Calu3 (cell line): ENCODE measurements at regions of chr3 and their contacts with region 1.

Region 1: GRCh38 chr3:180802837-180803236 is 109.6 kb upstream of the FXR1 start:
- DNase-seq: peak; percentile 20
- H3K4me3 Mint-ChIP-seq: no peak overlapping the region
- H3K27ac Mint-ChIP-seq: no peak overlapping the region
- H3K4me1 Mint-ChIP-seq: no peaks in the 10 kb centered on the region
- H3K27me3 Mint-ChIP-seq: no peaks in the 10 kb centered on the region
- CTCF ChIP-seq: peak; percentile 59

Region 2: DNA sequence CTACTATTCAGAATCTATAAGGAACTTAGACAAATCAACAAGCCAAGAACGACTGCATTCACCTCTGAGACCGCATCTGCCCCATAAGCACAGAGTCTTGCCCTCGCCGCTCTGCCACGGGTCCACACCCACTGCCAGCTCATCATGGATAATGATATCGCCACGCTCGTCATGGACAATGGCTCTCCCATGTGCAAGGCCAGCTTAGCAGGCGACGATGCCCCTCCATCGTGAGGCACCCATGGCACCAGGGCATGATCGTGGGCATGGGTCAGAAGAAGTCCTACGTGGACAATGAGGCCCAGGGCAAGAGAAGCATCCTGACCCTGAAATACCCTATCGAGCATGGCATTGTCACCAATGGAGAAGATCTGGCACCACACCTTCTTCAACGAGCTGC is 17.6 kb after region 1 on chr3:
- CTCF ChIA-PET with region 1: no interaction called
- intact Hi-C with region 1: no loop called
- DNase-seq: no peak
- H3K4me3 Mint-ChIP-seq: no peak overlapping the region
- H3K27ac Mint-ChIP-seq: no peak overlapping the region
- H3K4me1 Mint-ChIP-seq: no peaks in the 10 kb centered on the region
- H3K27me3 Mint-ChIP-seq: no peaks in the 10 kb centered on the region
- CTCF ChIP-seq: no peak

Region 3: DNA sequence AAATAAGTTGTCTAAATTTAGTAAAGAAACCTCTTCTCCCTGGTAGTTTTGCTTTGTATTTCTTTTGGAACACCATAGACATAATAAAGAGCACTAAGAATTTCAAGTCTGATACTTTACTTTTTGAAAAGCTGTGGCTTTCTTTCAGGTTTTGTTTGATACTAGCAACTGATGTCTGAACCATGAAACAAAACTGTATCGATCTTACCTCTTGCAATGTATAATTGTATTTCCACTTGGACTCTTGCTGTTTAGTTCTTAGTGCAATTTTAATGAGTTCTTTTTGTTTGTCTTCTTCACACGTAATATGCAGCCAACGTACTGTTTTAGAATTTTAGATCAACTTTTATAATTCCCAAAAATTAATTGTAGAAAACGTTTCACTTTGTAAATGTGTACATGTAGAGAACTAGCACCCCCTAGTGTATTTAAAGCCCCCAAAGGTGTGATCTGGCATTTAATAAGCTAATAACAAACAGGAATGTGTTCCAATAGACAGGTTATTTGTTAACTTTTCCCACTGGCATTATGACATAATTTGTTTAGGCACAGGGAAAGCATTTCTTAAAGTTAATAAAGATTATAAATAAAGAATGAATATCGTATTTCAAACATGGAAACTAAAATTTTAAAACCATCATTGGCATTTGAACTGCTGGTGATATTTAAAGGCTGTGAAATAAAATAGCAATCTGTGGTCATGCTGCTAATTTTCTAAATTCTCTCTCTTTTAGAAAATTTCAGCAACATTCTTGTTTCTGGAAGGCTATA is 475.8 kb after region 1 on chr3:
- CTCF ChIA-PET with region 1: interaction called, 4 read pairs
- intact Hi-C with region 1: loop called (anchors 5 kb)
- DNase-seq: no peak
- H3K4me3 Mint-ChIP-seq: no peak overlapping the region
- H3K27ac Mint-ChIP-seq: no peak overlapping the region
- H3K4me1 Mint-ChIP-seq: peaks cover 19% of the 10 kb centered on the region
- H3K27me3 Mint-ChIP-seq: no peaks in the 10 kb centered on the region
- CTCF ChIP-seq: no peak